Calu3 (cell line): ENCODE measurements at regions of chr22 and their contacts with region 1.

Region 1: GRCh38 chr22:29766632-29767170 is at the start of gene ZMAT5:
- DNase-seq: peak; percentile 96
- H3K4me3 Mint-ChIP-seq: peak within 1 kb of the TSS; percentile 98
- H3K27ac Mint-ChIP-seq: peak within 1 kb of the TSS; percentile 94
- H3K4me1 Mint-ChIP-seq: peaks cover 31% of the 10 kb centered on the region
- H3K27me3 Mint-ChIP-seq: no peaks in the 10 kb centered on the region
- CTCF ChIP-seq: no peak
- total RNA-seq, gene ZMAT5: 20.5 and 21.0 TPM in 2 replicates

Region 2: DNA sequence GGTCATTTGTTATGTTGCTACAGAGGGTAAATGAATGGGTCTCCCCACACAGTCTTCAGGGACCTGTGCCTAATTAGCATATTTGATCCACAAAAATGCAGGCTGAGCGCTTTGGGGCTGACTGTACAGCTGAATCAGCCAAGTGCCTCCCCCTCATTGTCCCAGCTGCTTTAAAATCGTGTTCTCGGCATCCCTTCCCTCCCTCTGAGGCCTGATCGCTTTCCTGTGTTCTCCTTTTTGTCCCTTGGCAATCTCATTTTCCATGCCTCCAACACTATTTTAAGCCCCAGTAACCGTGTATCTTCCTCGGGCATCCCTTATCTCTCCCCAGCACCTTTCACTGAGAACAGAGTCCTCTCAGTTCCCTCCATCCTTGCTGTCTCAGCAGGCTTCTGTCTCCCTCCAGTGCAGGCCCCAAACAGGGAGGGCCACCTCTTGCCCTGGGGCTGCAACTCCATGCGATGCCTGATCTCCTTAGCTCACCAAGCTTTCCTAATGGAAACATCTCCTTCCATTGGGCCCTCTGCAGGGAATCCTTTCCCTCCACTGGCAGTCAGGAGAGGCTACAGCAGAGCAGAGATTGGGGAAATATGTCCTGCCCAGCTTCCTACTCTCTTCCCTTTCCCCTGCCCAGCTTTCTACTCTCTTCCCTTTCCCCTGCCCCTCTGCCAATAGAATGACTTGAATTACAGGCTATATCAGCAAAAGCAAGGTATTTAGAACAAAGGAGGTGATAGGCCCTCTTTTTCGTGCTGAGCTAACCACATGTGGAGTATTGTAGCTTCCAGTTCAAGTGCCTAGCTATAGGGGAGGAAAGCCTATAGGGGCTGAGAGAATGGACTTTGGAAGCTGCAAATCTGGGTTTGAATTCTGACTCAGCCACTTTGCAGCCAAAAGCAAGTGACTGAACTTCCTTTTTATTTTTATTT is 14.3 kb after region 1 on chr22:
- CTCF ChIA-PET with region 1: interaction called, 13 read pairs
- intact Hi-C with region 1: no loop called
- DNase-seq: peak; percentile 44
- H3K4me3 Mint-ChIP-seq: peak overlapping the region; percentile 6
- H3K27ac Mint-ChIP-seq: peak overlapping the region; percentile 51
- H3K4me1 Mint-ChIP-seq: peaks cover 33% of the 10 kb centered on the region
- H3K27me3 Mint-ChIP-seq: no peaks in the 10 kb centered on the region
- CTCF ChIP-seq: no peak